Transverse colon (tissue), 4 donors: ENCODE measurements at regions of chr7 and their contacts with region 1.

Region 1: GRCh38 chr7:66642186-66642585 is 13.5 kb downstream of the KCTD7 start:
- DNase-seq: no peak
- H3K4me3 ChIP-seq: no peak overlapping the region
- H3K27ac ChIP-seq: peak overlapping the region in 3 of 4 donors; percentile 76 to 79 (median 77)
- H3K4me1 ChIP-seq: peaks cover 5 to 26% (median 16%) of the 10 kb centered on the region in 4 donors
- H3K27me3 ChIP-seq: no peaks in the 10 kb centered on the region
- CTCF ChIP-seq: no peak
- EP300 ChIP-seq: no peak
- POLR2A ChIP-seq: no peak

Region 2: GRCh38 chr7:66296001-66296521 is 346.1 kb before region 1 on chr7:
- in situ Hi-C with region 1: no loop called
- intact Hi-C with region 1: no loop called
- DNase-seq: no peak
- H3K4me3 ChIP-seq: no peak overlapping the region
- H3K27ac ChIP-seq: no peak overlapping the region
- H3K4me1 ChIP-seq: no peaks in the 10 kb centered on the region
- H3K27me3 ChIP-seq: no peaks in the 10 kb centered on the region
- CTCF ChIP-seq: no peak
- EP300 ChIP-seq: no peak
- POLR2A ChIP-seq: no peak

Region 3: DNA sequence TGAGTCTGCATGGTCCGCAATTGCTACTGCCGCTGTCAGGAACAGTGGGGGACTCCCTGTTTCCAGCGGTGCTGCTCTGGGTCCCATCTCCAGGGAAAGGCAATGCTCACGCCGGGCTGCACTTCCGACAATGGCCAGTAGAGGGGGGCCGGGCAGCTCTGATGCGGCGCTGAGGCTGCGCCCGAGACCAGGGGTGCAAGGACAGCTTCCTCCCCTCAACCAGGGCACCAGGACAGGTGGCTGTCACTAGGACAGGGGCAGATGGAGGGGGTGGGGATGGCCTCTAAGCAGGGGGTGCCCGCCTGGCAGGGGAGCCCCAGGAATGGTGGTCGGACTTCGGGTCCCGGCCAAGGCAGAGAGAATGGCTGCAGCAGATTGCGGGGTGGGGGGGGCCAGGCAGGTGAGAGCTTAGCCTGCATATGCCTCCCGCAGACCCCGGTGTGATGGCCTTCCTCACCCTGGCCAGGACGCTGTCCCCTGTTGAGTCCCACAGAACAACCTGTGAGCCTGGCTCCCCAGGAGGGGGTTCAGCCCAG is 84.5 kb before region 1 on chr7:
- in situ Hi-C with region 1: no loop called
- intact Hi-C with region 1: loop called (anchors 10 kb)
- DNase-seq: peak; percentile 78
- H3K4me3 ChIP-seq: no peak overlapping the region
- H3K27ac ChIP-seq: no peak overlapping the region
- H3K4me1 ChIP-seq: peaks cover 0 to 9% (median 4%) of the 10 kb centered on the region in 4 donors
- H3K27me3 ChIP-seq: no peaks in the 10 kb centered on the region
- CTCF ChIP-seq: peak; percentile 95 to 99 (median 98)
- EP300 ChIP-seq: no peak
- POLR2A ChIP-seq: no peak

Region 4: GRCh38 chr7:66681491-66682349 is 39.5 kb after region 1 on chr7:
- in situ Hi-C with region 1: no loop called
- intact Hi-C with region 1: no loop called
- DNase-seq: peak; percentile 99
- H3K4me3 ChIP-seq: peak overlapping the region; percentile 70 to 83 (median 82)
- H3K27ac ChIP-seq: peak overlapping the region; percentile 97 to 100 (median 98)
- H3K4me1 ChIP-seq: peaks cover 6 to 31% (median 18%) of the 10 kb centered on the region in 4 donors
- H3K27me3 ChIP-seq: no peaks in the 10 kb centered on the region
- CTCF ChIP-seq: no peak
- EP300 ChIP-seq: no peak
- POLR2A ChIP-seq: peak; percentile 97

Region 5: GRCh38 chr7:66731986-66732385 is 89.8 kb after region 1 on chr7:
- in situ Hi-C with region 1: no loop called
- intact Hi-C with region 1: no loop called
- DNase-seq: no peak
- H3K4me3 ChIP-seq: no peak overlapping the region
- H3K27ac ChIP-seq: no peak overlapping the region
- H3K4me1 ChIP-seq: peaks cover 0 to 8% (median 0%) of the 10 kb centered on the region in 4 donors
- H3K27me3 ChIP-seq: no peaks in the 10 kb centered on the region
- CTCF ChIP-seq: no peak
- EP300 ChIP-seq: no peak
- POLR2A ChIP-seq: no peak